ENCODE measurements at regions of chr12 and their contacts with region 1.

Region 1: DNA sequence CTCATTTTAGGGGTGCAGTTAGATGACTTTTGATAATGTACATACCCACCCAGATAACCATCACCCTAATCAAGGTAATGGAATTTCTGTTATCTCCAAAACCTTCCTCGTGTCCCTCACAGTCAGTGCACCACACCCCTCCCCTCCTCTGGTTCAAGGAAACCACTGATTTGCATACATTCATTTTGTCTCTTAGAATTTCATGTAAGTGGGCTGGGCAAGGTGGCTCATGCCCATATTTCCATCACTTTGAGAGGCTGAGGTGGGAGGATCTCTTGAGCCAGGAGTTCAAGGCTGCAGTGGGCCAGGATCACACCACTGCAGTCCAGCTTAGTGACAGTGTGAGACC is 15.7 kb downstream of the ADIPOR2 start:
- DNase-seq: no peak
- ATAC-seq: no peak
- H3K4me3 ChIP-seq: no peak overlapping the region
- H3K27ac ChIP-seq: no peak overlapping the region
- H3K4me1 ChIP-seq: peaks cover 80% of the 10 kb centered on the region
- H3K27me3 ChIP-seq: no peaks in the 10 kb centered on the region
- CTCF ChIP-seq: no peak
- EP300 ChIP-seq: no peak
- POLR2A ChIP-seq: no peak
- RAD21 ChIP-seq: no peak

Region 2: DNA sequence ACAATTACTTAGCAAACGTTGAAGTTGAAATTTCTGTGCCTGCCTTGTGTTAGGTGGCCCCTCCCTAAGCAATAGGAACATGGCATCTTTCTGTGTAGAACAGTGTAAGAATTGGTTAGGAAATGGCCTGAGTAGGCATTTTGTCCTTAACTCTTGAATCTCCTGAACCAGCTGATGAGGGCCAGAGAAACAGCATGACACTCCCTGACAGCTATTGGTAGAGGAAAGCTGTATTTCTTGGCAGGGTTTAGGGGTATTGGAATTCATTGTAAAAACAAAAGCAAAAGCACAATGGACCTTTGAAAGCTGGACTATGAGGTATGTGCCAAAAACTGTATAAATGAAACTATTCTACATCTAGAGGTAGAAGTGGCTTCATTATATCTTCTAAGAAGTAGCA is 73.2 kb after region 1 on chr12:
- CTCF ChIA-PET with region 1: no interaction called
- POLR2A ChIA-PET with region 1: no interaction called
- in situ Hi-C with region 1: loop called (anchors 10 kb)
- intact Hi-C with region 1: no loop called
- DNase-seq: no peak
- ATAC-seq: no peak
- H3K4me3 ChIP-seq: no peak overlapping the region
- H3K27ac ChIP-seq: no peak overlapping the region
- H3K4me1 ChIP-seq: peaks cover 27% of the 10 kb centered on the region
- H3K27me3 ChIP-seq: no peaks in the 10 kb centered on the region
- CTCF ChIP-seq: no peak
- EP300 ChIP-seq: no peak
- POLR2A ChIP-seq: no peak
- RAD21 ChIP-seq: no peak